Adrenal gland (tissue), 19 donors: ENCODE measurements at regions of chr12 and their contacts with region 1.

Region 1: GRCh38 chr12:42237052-42237852 is 796 bp downstream of the YAF2 start:
- DNase-seq: peak; percentile 75 to 90 (median 86)
- H3K4me3 ChIP-seq: peak overlapping the region in 3 of 4 donors; percentile 58 to 96 (median 75)
- H3K27ac ChIP-seq: peak overlapping the region in 4 of 5 donors; percentile 91 to 98 (median 95)
- H3K4me1 ChIP-seq: peaks cover 5 to 39% of the 10 kb centered on the region in 2 donors
- H3K27me3 ChIP-seq: no peaks in the 10 kb centered on the region
- CTCF ChIP-seq: peak in 5 of 6 experiments; percentile 22 to 53 (median 32)
- POLR2A ChIP-seq: peak; percentile 40 to 68

Region 2: DNA sequence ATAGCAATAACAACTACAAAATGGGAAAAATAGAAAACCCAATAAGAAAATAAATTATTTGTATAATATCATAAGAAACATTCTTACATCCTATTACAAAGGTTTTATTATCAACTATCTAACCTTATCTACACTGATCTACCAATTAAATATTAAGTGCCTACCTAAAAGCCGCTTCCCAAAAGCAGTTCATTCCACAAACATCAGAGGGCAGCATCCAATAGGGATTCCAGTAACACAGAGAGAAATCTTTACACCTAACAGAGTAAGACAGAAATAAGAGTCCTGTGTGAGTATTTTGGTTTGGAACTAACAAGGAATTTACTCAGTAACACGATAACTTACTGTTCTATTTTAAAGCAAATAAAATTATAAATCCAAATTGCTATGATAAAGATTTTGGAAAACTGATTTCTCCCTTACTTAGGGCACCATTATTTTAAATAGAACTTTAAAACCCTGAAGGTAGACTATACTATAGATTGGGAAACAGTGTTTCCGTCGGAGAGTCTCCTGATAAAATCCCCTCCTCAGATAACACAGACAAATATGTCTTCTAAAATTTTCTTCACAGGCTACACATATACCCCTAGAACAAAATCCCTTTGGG is 107.6 kb before region 1 on chr12:
- intact Hi-C with region 1: loop called in 1 of 2 experiments (anchors 10 kb)
- DNase-seq: peak; percentile 25 to 76 (median 54)
- H3K4me3 ChIP-seq: no peak overlapping the region
- H3K27ac ChIP-seq: no peak overlapping the region
- H3K4me1 ChIP-seq: peaks cover 8 to 18% of the 10 kb centered on the region in 2 donors
- H3K27me3 ChIP-seq: no peaks in the 10 kb centered on the region
- CTCF ChIP-seq: peak; percentile 77 to 96 (median 87)
- POLR2A ChIP-seq: no peak

Region 3: GRCh38 chr12:42325653-42326474 is 88.6 kb after region 1 on chr12 and contains the starts of genes PPHLN1 and ZCRB1:
- intact Hi-C with region 1: loop called (anchors 10 kb)
- DNase-seq: peak; percentile 85 to 92 (median 90)
- H3K4me3 ChIP-seq: peak within 1 kb of the TSS; percentile 17 to 89 (median 48)
- H3K27ac ChIP-seq: peak within 1 kb of the TSS in 4 of 5 donors; percentile 70 to 88 (median 80)
- H3K4me1 ChIP-seq: peaks cover 10 to 35% of the 10 kb centered on the region in 2 donors
- H3K27me3 ChIP-seq: no peaks in the 10 kb centered on the region
- CTCF ChIP-seq: peak in 1 of 6 experiments; percentile 26
- POLR2A ChIP-seq: peak; percentile 29 to 85
- total RNA-seq, gene PPHLN1: 34.0 to 91.1 (median 55.8) TPM
- total RNA-seq, gene ZCRB1: 23.5 to 65.2 (median 51.8) TPM